Activated T-helper 2 cell treated with anti-CD3 and anti-CD28 coated beads, Interferon-gamma antibody, Interleukin-2, Interleukin-4, amounts not matched to agents 10 μg/mL and 5 μg/mL and 100 μg/mL, durations not matched to agents 14 hours and 24 hours and 36 hours (primary cell): ENCODE measurements at regions of chr3 and their contacts with region 1.

Region 1: DNA sequence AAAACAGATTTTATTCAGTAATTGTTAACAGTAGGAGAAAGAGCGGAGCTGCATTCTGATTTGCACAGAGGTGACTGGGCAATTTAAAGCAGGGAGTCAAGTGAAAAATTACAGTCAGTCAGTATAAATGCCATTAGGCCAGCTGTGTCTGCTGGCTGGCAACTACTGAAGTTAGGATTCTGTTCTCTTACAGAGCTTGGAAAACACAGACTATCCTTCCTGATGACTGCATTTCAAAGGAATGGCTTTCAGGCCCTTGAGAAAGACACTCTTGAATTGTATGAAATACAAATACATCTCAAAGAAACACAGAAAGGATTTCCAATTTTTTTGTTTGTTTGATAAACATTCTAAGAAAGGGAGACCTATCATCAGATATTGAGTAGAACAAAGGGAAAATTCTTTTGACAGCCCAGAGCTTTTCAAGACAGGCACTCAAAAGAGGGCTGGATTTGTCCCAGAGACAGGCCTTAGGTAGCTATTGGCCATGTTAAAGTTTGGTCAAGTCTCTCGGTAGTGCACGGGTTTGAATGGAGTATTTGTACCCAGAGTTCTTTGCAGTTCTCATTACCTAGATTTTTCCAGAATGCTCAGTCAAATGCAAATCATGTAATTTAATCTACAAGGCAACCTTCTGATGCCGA is 551.2 kb upstream of the CCDC54 start:
- DNase-seq: no peak
- H3K4me3 Mint-ChIP-seq: no peak overlapping the region
- H3K27ac Mint-ChIP-seq: no peak overlapping the region
- H3K4me1 Mint-ChIP-seq: peaks cover 19% of the 10 kb centered on the region
- H3K27me3 Mint-ChIP-seq: peaks cover 2% of the 10 kb centered on the region

Region 2: GRCh38 chr3:106518516-106518915 is 307.6 kb before region 1 on chr3:
- intact Hi-C with region 1: no loop called
- DNase-seq: no peak
- H3K4me3 Mint-ChIP-seq: no peak overlapping the region
- H3K27ac Mint-ChIP-seq: no peak overlapping the region
- H3K4me1 Mint-ChIP-seq: no peaks in the 10 kb centered on the region
- H3K27me3 Mint-ChIP-seq: no peaks in the 10 kb centered on the region

Region 3: GRCh38 chr3:106850437-106850836 is 24.4 kb after region 1 on chr3:
- intact Hi-C with region 1: no loop called
- DNase-seq: no peak
- H3K4me3 Mint-ChIP-seq: no peak overlapping the region
- H3K27ac Mint-ChIP-seq: no peak overlapping the region
- H3K4me1 Mint-ChIP-seq: no peaks in the 10 kb centered on the region
- H3K27me3 Mint-ChIP-seq: no peaks in the 10 kb centered on the region

Region 4: DNA sequence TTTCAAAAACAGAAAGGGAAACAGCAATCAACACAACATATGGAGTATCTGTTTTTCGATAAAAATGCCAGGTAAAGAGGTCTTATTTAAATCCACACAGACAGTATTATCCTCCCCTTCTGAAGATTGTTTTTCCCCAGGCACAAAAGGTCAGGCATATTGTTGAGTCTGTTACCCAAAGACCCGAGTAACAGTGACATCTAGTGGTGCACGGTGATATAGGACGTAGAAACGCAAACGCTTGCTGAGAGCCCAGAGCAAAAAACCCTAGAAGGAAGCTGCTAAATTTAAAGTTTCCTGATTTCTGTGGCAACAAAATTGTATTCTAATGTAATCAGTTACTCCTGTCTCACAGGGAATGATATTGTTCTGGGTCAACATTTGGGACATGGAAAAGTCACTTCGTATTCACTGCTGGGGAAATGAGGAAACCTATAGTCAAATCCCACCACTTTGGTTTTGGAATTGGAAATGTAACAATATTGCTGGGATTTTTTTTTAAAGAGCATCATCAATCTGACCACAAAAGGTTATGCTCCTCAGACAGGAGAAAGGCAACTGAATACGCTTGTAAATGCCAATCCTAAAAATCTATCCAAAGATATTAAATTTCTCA is 238.5 kb after region 1 on chr3:
- intact Hi-C with region 1: loop called (anchors 2 kb)
- DNase-seq: peak; percentile 33
- H3K4me3 Mint-ChIP-seq: no peak overlapping the region
- H3K27ac Mint-ChIP-seq: no peak overlapping the region
- H3K4me1 Mint-ChIP-seq: peaks cover 12% of the 10 kb centered on the region
- H3K27me3 Mint-ChIP-seq: peaks cover 8% of the 10 kb centered on the region